ENCODE measurements at regions of chr5 and their contacts with region 1.

Region 1: DNA sequence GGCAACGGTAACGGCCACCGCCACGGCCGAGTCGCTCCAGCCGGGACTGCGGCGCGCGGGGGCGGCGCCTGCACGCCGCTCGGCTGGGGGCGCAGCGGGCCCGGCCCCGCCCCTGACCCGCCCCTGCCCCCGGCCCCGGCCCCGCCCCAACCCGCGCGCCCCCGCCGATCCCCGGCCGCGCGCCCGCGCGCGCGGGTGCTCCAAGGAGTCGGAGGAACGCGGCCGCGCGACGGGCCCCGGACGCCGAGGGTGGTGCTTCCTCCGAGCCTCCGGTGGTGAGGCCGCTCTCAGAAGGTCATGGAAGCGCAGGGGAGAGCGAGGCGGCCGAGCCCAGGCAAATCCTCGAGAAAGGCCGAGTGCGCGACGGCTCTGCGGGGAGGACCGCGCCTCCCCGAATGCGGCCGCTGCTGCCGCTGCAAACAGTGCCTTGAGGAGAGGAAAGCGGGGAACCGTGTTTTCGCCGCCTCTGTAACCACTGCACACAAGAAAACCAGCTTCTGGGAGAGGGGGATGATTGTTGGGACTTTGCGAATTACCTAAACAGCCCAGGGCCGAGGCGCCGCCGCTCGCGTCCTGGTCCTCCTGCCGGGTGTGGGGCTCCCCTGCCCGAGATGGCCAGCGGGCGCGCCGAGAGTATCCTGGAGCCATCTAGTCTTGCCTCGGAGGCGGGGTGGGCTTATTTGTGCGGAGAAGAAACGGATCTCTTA is at the start of gene LIFR:
- DNase-seq: peak; percentile 89
- H3K4me3 ChIP-seq: peak within 1 kb of the TSS; percentile 87
- H3K27ac ChIP-seq: peak within 1 kb of the TSS; percentile 99
- H3K4me1 ChIP-seq: peaks cover 64% of the 10 kb centered on the region
- H3K27me3 ChIP-seq: no peaks in the 10 kb centered on the region
- CTCF ChIP-seq: peak; percentile 24
- total RNA-seq, gene LIFR: 45.8 TPM

Region 2: GRCh38 chr5:38316544-38317224 is 240.1 kb before region 1 on chr5:
- intact Hi-C with region 1: no loop called
- DNase-seq: peak; percentile 18
- H3K4me3 ChIP-seq: no peak overlapping the region
- H3K27ac ChIP-seq: peak overlapping the region; percentile 73
- H3K4me1 ChIP-seq: peaks cover 3% of the 10 kb centered on the region
- H3K27me3 ChIP-seq: peaks cover 14% of the 10 kb centered on the region
- CTCF ChIP-seq: no peak

Region 3: GRCh38 chr5:38591523-38591849 is 34.7 kb after region 1 on chr5:
- intact Hi-C with region 1: loop called (anchors 5 kb)
- DNase-seq: no peak
- H3K4me3 ChIP-seq: no peak overlapping the region
- H3K27ac ChIP-seq: peak overlapping the region; percentile 59
- H3K4me1 ChIP-seq: peaks cover 41% of the 10 kb centered on the region
- H3K27me3 ChIP-seq: no peaks in the 10 kb centered on the region
- CTCF ChIP-seq: no peak

Region 4: DNA sequence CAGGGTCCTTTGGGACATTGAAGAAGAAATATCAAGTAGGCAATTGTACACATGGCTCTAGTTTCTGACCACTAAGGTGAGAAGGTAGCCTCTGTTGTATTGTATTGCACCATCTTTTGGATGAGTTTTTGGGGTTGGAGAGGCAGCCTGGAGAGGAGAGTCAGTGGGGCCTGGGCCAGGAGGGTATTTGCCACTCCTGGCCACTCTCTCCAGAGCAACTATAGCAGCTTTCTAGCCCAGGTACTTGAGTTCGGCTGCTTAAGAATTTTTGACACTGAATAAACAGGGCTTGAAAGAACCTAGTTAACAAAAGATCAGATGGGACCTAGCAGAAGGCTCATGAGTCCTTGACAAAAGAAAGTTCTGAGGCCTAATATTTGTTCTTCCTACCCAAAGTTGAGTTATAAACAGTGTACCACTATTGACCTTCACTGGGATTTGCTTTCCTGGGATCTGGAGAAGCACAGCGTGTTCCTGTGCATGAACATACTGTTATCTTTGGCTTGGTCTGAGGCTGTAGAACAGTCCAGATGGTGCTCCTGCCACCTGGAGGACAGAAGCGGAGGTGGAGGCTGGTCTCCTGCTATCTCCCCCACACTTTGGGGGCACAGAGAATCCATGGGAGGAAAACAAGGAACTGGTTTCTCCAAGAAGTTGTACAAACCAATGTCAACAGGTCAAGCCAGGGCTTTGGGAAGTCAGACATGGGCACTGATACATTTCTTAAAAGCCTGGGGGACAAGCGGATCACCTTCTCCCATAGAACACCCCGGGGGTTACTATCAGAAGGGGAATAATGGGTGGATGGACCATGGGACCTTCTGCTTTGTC is 110.1 kb after region 1 on chr5:
- intact Hi-C with region 1: loop called (anchors 10 kb)
- DNase-seq: peak; percentile 43
- H3K4me3 ChIP-seq: no peak overlapping the region
- H3K27ac ChIP-seq: peak overlapping the region; percentile 70
- H3K4me1 ChIP-seq: peaks cover 28% of the 10 kb centered on the region
- H3K27me3 ChIP-seq: no peaks in the 10 kb centered on the region
- CTCF ChIP-seq: peak; percentile 86

Measured in left ventricle myocardium inferior (tissue), 1 donor.